CD4-positive, alpha-beta T cell (primary cell): ENCODE measurements at regions of chr10 and their contacts with region 1.

Region 1: GRCh38 chr10:59906417-59907202 is at the start of gene CCDC6:
- DNase-seq: peak; percentile 85 to 96 (median 92)
- ATAC-seq: peak; percentile 89
- H3K4me3 ChIP-seq: peak within 1 kb of the TSS; percentile 86
- H3K4me3 Mint-ChIP-seq: peak within 1 kb of the TSS; percentile 91
- H3K27ac ChIP-seq: peak within 1 kb of the TSS; percentile 68 to 83
- H3K27ac Mint-ChIP-seq: peak within 1 kb of the TSS; percentile 89
- H3K4me1 ChIP-seq: peaks cover 39% of the 10 kb centered on the region
- H3K4me1 Mint-ChIP-seq: peaks cover 62% of the 10 kb centered on the region
- H3K27me3 ChIP-seq: no peaks in the 10 kb centered on the region
- H3K27me3 Mint-ChIP-seq: no peaks in the 10 kb centered on the region
- CTCF ChIP-seq: peak; percentile 83
- total RNA-seq, gene CCDC6: 21.6 to 22.1 TPM

Region 2: GRCh38 chr10:58268870-58269605 is 1637.6 kb before region 1 on chr10 and contains the start of gene CISD1:
- CTCF ChIA-PET with region 1: interaction called, 7 read pairs
- POLR2A ChIA-PET with region 1: interaction called, 5 read pairs
- intact Hi-C with region 1: loop called in 1 of 2 experiments (anchors 10 kb)
- DNase-seq: peak; percentile 87 to 100 (median 92)
- ATAC-seq: peak; percentile 63
- H3K4me3 ChIP-seq: peak within 1 kb of the TSS; percentile 81
- H3K4me3 Mint-ChIP-seq: peak within 1 kb of the TSS; percentile 96
- H3K27ac ChIP-seq: peak within 1 kb of the TSS; percentile 81 to 87
- H3K27ac Mint-ChIP-seq: peak within 1 kb of the TSS; percentile 91
- H3K4me1 ChIP-seq: peaks cover 22% of the 10 kb centered on the region
- H3K4me1 Mint-ChIP-seq: peaks cover 41% of the 10 kb centered on the region
- H3K27me3 ChIP-seq: no peaks in the 10 kb centered on the region
- H3K27me3 Mint-ChIP-seq: no peaks in the 10 kb centered on the region
- CTCF ChIP-seq: no peak
- total RNA-seq, gene CISD1: 1.5 to 2.0 TPM

Region 3: GRCh38 chr10:58625070-58625469 is 1281.5 kb before region 1 on chr10:
- CTCF ChIA-PET with region 1: no interaction called
- POLR2A ChIA-PET with region 1: no interaction called
- intact Hi-C with region 1: no loop called
- DNase-seq: no peak
- ATAC-seq: no peak
- H3K4me3 ChIP-seq: no peak overlapping the region
- H3K4me3 Mint-ChIP-seq: no peak overlapping the region
- H3K27ac ChIP-seq: no peak overlapping the region
- H3K27ac Mint-ChIP-seq: no peak overlapping the region
- H3K4me1 ChIP-seq: no peaks in the 10 kb centered on the region
- H3K4me1 Mint-ChIP-seq: no peaks in the 10 kb centered on the region
- H3K27me3 ChIP-seq: no peaks in the 10 kb centered on the region
- H3K27me3 Mint-ChIP-seq: no peaks in the 10 kb centered on the region
- CTCF ChIP-seq: no peak

Region 4: DNA sequence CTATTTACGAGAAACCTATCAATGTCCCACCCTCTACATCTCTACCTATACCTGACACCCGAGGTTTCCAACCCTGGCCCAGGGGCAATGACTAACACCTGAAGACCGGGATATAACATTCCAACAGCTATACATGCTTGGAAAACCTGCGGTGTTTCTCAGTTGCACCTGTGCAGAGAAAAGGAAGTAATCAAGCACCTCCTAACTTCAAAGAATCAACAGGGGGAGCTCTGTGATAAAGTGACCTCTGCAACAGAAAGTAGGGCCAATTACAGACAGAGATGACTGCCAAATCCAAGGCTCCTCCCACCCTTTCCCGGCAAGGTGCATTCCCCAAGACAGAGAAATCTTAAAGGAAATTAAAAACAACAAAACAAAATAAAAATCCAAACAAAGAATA is 41.5 kb before region 1 on chr10:
- CTCF ChIA-PET with region 1: interaction called, 26 read pairs
- POLR2A ChIA-PET with region 1: interaction called, 30 read pairs
- intact Hi-C with region 1: loop called in 1 of 2 experiments (anchors 5 kb)
- DNase-seq: peak in 3 of 14 experiments; percentile 39 to 55 (median 51)
- ATAC-seq: peak; percentile 54
- H3K4me3 ChIP-seq: no peak overlapping the region
- H3K4me3 Mint-ChIP-seq: no peak overlapping the region
- H3K27ac ChIP-seq: no peak overlapping the region
- H3K27ac Mint-ChIP-seq: peak overlapping the region; percentile 10
- H3K4me1 ChIP-seq: peaks cover 16% of the 10 kb centered on the region
- H3K4me1 Mint-ChIP-seq: peaks cover 79% of the 10 kb centered on the region
- H3K27me3 ChIP-seq: no peaks in the 10 kb centered on the region
- H3K27me3 Mint-ChIP-seq: no peaks in the 10 kb centered on the region
- CTCF ChIP-seq: peak; percentile 58

Region 5: GRCh38 chr10:59891349-59892335 is 15.0 kb before region 1 on chr10:
- CTCF ChIA-PET with region 1: interaction called, 12 read pairs
- POLR2A ChIA-PET with region 1: interaction called, 3 read pairs
- intact Hi-C with region 1: no loop called
- DNase-seq: no peak
- ATAC-seq: no peak
- H3K4me3 ChIP-seq: no peak overlapping the region
- H3K4me3 Mint-ChIP-seq: no peak overlapping the region
- H3K27ac ChIP-seq: no peak overlapping the region
- H3K27ac Mint-ChIP-seq: no peak overlapping the region
- H3K4me1 ChIP-seq: peaks cover 43% of the 10 kb centered on the region
- H3K4me1 Mint-ChIP-seq: peaks cover 81% of the 10 kb centered on the region
- H3K27me3 ChIP-seq: no peaks in the 10 kb centered on the region
- H3K27me3 Mint-ChIP-seq: no peaks in the 10 kb centered on the region
- CTCF ChIP-seq: no peak

Region 6: DNA sequence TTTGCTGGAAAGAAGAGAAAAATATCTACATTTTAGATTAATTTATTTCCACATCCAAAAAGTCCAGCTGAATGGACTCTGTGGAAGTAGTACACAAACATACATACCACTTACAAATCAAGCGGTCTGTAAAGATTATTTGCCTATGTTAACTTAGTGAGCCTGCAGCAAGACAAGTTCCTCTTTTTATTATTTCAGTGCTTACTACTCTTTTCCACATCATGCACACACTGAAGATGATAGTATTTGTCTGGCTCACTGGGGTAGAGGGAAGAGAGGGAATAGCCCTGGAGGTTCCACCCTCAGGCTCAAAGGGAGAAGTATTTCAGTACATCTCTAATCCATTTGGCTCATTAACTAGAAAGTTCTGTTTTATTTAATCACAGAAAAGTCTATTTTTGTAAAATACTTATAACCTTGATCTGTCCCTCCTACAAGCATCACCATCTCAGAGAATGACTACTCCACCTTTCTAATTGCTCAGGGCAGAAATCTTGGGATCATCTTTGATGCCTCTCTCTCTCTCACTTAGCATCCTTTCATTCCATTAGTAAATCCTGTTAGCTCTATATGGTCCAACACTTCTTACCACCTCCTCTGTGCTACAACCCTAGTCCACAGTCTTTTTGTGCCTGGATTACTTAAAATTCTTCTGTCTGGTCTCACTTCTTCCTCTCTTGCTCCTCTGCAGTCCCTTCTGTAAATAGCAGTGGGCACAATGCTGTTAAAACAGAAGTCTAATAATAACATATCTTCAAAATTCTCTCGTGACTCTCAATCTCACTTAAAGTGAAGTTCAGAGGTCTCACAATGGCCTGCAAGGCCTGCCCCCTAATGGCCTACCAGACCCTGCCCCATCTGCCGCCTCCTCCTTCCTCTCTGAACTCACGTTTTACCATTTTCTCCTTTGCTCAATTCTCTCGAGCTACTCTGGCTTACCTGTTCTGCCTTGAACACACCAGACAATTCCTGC is 64.1 kb after region 1 on chr10:
- CTCF ChIA-PET with region 1: no interaction called
- POLR2A ChIA-PET with region 1: no interaction called
- intact Hi-C with region 1: no loop called
- DNase-seq: no peak
- ATAC-seq: no peak
- H3K4me3 ChIP-seq: no peak overlapping the region
- H3K4me3 Mint-ChIP-seq: no peak overlapping the region
- H3K27ac ChIP-seq: no peak overlapping the region
- H3K27ac Mint-ChIP-seq: no peak overlapping the region
- H3K4me1 ChIP-seq: no peaks in the 10 kb centered on the region
- H3K4me1 Mint-ChIP-seq: no peaks in the 10 kb centered on the region
- H3K27me3 ChIP-seq: no peaks in the 10 kb centered on the region
- H3K27me3 Mint-ChIP-seq: no peaks in the 10 kb centered on the region
- CTCF ChIP-seq: no peak

Region 7: DNA sequence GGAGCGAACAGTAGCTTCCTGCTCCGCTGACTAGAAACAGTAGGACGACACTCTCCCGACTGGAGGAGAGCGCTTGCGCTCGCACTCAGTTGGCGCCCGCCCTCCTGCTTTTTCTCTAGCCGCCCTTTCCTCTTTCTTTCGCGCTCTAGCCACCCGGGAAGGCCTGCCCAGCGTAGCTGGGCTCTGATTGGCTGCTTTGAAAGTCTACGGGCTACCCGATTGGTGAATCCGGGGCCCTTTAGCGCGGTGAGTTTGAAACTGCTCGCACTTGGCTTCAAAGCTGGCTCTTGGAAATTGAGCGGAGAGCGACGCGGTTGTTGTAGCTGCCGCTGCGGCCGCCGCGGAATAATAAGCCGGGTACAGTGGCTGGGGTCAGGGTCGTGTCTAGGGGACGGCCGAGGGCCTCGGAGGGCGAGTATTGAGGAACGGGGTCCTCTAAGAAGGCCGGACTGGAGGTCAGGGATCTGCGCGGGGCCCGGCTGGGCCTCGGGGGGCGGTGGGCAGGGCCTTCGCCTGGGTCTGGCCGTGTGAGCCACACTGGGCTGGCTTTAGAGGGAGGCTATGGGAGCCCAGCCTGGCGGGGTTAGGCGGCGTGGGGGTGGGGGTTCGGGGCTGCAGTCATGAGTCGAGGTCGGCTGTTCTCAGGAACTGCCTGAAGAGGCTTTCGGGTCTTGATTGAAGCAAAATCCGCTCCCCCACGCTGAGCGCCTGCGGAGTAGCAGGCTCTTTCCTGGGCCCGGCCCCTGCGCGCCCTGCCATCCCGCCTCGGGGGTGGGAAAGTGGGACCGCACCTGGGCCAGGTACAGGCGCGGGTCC is 871.8 kb after region 1 on chr10 and contains the start of gene CDK1:
- CTCF ChIA-PET with region 1: no interaction called
- POLR2A ChIA-PET with region 1: no interaction called
- intact Hi-C with region 1: loop called (anchors 5 kb)
- DNase-seq: peak; percentile 89 to 98 (median 94)
- ATAC-seq: peak; percentile 97
- H3K4me3 ChIP-seq: peak within 1 kb of the TSS; percentile 67
- H3K4me3 Mint-ChIP-seq: peak within 1 kb of the TSS; percentile 98
- H3K27ac ChIP-seq: no peak within 1 kb of the TSS
- H3K27ac Mint-ChIP-seq: peak within 1 kb of the TSS; percentile 22
- H3K4me1 ChIP-seq: peaks cover 5% of the 10 kb centered on the region
- H3K4me1 Mint-ChIP-seq: peaks cover 11% of the 10 kb centered on the region
- H3K27me3 ChIP-seq: no peaks in the 10 kb centered on the region
- H3K27me3 Mint-ChIP-seq: no peaks in the 10 kb centered on the region
- CTCF ChIP-seq: no peak
- total RNA-seq, gene CDK1: 0.75 to 1.1 TPM